Ovary (tissue), 10 donors: ENCODE measurements at regions of chr16 and their contacts with region 1.

Region 1: DNA sequence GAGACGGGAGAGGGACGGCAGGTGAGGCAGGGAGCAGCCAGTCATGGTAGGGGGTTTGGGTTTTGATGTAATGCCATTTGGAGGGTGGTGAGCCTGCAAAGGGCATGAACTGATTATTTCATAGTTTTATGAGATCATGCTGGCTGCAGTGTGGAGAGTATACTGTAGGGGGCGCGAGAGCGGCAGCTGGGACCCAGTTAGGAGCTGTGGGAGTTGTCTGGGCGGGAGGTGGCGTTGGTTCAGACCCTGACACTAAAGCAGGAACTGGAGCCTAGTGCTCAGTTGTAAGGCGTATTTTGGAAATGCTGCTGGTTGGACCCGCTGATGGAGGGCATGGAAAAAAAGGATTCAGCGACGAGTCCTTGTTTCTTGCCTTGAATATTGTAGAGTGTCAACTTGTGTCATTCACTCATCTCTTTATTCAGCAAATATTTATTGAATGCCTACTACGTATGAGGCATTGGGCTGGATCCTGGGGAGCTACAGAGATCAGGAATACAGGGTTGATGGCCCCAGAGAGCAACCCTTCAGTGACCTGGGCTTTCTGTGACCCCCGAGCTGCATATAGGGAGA is 23.7 kb upstream of the KDM8 start:
- DNase-seq: peak; percentile 24 to 78 (median 69)
- H3K4me3 ChIP-seq: no peak overlapping the region
- H3K27ac ChIP-seq: no peak overlapping the region
- H3K4me1 ChIP-seq: peaks cover 4% of the 10 kb centered on the region
- H3K27me3 ChIP-seq: no peaks in the 10 kb centered on the region
- CTCF ChIP-seq: peak; percentile 15 to 68 (median 56)
- EP300 ChIP-seq: no peak
- POLR2A ChIP-seq: no peak

Region 2: DNA sequence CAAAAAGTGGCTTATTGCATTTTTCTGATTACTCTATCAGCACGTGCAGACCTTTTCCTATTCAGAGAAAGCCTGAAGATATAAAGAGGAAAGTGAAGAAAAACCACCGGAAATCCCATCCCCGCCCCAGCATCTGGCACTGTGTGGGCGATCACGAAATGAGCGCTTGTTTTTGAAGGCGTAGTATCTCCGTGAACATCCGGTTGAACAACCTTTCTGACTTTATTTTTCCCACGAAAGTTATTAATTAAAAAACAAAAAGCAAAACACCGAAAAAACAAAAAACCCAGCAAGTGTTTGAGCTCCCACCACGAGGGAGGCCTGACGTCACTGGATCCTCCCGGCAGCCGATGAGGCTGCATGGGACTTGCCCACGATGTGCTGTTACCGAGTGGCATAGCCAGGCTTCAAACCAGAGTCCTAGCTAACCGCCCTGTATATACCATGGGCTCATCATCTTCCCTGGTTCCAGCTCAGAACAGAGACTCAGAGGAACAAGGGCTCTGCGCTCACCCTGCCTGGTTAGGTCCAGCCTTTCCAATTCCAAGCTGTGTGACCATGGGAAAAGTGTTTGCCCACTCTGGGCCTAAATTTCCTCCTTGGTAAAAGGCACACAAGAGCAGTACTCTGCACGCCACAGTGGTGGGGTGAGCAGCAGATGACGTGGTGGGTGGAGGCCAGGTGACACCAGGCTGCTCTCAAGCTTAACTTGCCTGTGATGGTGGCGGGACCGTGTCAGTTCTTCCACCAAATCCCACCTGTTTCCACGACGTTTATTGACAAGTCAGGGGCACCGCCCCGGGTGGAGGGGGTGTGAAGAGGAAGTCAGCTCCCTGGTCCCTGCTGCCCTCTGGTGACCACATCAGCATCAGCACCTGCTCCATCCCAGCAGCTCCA is 188.1 kb after region 1 on chr16:
- intact Hi-C with region 1: loop called in 3 of 4 experiments (anchors 5 to 10 kb)
- DNase-seq: peak; percentile 19 to 75 (median 68)
- H3K4me3 ChIP-seq: no peak overlapping the region
- H3K27ac ChIP-seq: peak overlapping the region in 1 of 2 donors; percentile 13
- H3K4me1 ChIP-seq: peaks cover 4% of the 10 kb centered on the region
- H3K27me3 ChIP-seq: no peaks in the 10 kb centered on the region
- CTCF ChIP-seq: peak in 2 of 3 donors; percentile 51
- EP300 ChIP-seq: no peak
- POLR2A ChIP-seq: no peak

Region 3: DNA sequence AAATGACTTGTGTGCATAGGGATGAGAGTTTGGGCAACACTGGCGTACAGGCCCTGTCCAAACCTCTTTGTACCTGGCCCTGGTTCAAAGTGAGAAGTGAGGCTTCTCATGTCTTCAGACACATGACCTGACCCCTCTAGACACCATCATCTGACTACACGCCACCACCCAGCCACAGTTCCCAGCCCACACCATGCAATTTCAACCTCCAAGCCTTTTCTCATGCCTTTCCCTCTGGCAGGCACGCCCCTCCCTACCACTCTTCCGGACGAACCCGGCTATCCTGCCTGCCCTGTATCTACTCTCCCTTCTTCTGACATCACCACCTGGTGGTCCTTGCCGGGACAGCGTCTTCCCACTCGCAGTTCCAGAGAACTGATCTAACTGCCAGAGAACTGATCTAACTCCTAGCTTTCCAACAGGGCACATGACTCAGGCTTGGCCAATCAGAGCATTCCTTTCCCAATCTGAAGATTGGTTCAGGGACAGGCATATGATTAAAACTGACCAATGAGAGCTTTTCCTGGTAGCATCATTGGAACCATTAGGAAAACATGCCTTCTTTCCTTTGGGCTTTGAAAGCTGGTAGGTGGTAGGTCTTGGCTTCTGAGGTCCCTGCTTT is 195.3 kb after region 1 on chr16:
- intact Hi-C with region 1: loop called in 2 of 4 experiments (anchors 5 to 10 kb)
- DNase-seq: peak in 4 of 5 donors; percentile 40 to 52 (median 50)
- H3K4me3 ChIP-seq: no peak overlapping the region
- H3K27ac ChIP-seq: no peak overlapping the region
- H3K4me1 ChIP-seq: peaks cover 1% of the 10 kb centered on the region
- H3K27me3 ChIP-seq: no peaks in the 10 kb centered on the region
- CTCF ChIP-seq: peak in 1 of 3 donors; percentile 26
- EP300 ChIP-seq: no peak
- POLR2A ChIP-seq: no peak

Region 4: DNA sequence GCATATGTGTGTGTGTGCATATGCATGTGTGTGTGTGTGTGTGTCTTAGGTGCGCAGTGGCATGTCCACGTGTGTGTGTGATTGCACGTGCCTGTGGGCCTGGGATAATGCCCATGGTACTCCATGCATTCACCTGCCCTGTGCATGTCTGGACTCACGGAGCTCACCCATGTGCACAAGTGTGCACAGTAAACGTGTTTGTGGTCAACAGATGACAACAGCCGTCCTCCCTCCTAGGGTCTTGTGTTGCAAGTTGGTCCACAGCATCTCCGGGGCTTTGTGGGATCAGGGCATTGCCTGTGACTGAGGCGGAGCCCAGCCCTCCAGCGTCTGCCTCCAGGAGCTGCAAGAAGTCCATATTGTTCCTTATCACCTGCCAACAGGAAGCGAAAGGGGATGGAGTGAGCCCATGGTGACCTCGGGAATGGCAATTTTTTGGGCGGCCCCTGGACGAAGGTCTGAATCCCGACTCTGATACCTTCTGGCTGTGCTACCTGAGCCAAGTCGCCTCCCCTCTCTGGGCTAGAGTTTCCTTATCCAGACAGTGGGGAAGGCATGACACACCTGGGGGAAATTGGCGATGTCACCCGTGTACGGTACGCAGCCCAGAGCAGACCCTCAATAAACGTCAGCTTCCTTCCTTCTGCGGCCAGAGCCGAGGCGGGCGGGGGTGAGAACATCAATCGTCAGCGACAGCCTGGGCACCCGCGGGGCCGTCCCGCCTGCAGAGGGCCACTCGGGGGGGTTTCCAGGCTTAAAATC is 270.0 kb after region 1 on chr16:
- intact Hi-C with region 1: loop called in 1 of 4 experiments (anchors 10 kb)
- DNase-seq: no peak
- H3K4me3 ChIP-seq: no peak overlapping the region
- H3K27ac ChIP-seq: no peak overlapping the region
- H3K4me1 ChIP-seq: no peaks in the 10 kb centered on the region
- H3K27me3 ChIP-seq: no peaks in the 10 kb centered on the region
- CTCF ChIP-seq: no peak
- EP300 ChIP-seq: no peak
- POLR2A ChIP-seq: no peak